ENCODE measurements at regions of chr13 and their contacts with region 1.

Region 1: DNA sequence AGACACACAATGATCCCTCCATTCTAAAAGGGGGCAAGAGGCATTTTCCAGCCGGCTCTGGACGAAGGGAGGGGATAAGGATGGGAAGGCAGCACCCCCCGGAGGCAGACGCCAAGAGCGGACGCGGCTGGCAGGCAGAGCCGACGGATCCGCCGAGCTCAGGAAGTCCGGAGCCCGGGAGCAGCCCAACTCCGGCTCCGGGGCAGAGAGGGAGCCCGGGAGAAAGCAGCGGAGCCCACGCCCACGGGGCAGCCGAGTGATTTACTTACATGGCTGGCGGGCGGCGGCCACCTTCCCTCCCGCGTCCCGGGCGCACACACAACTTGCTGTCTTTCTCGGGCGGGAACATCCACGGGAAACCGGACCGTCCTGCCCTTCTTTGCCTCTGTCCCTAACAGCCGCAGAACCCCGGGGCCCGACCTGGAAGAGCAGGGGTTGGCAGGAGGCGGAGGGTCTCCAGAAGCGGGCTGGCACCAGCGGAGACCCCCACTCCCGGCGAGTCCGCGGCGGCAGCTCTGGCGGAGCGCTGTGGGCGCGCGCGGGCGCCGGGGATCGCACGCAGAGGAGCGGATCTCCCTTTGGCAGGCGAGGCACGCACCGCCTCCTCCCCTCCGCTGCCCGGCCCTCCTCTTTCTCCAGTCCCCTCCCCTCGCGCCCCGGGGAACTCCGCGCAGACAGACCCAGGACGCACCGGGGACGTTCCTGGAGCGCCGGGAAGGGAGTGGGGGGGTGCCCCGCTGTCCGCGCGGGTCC is at the start of gene LHFPL6:
- DNase-seq: peak; percentile 79
- H3K4me3 ChIP-seq: peak within 1 kb of the TSS; percentile 65 to 69
- H3K27ac ChIP-seq: peak within 1 kb of the TSS; percentile 79 to 85
- H3K4me1 ChIP-seq: no peaks in the 10 kb centered on the region
- H3K27me3 ChIP-seq: no peaks in the 10 kb centered on the region
- CTCF ChIP-seq: peak in 1 of 4 experiments; percentile 17
- POLR2A ChIP-seq: peak; percentile 70
- total RNA-seq, gene LHFPL6: 7.5 to 40.0 TPM

Region 2: DNA sequence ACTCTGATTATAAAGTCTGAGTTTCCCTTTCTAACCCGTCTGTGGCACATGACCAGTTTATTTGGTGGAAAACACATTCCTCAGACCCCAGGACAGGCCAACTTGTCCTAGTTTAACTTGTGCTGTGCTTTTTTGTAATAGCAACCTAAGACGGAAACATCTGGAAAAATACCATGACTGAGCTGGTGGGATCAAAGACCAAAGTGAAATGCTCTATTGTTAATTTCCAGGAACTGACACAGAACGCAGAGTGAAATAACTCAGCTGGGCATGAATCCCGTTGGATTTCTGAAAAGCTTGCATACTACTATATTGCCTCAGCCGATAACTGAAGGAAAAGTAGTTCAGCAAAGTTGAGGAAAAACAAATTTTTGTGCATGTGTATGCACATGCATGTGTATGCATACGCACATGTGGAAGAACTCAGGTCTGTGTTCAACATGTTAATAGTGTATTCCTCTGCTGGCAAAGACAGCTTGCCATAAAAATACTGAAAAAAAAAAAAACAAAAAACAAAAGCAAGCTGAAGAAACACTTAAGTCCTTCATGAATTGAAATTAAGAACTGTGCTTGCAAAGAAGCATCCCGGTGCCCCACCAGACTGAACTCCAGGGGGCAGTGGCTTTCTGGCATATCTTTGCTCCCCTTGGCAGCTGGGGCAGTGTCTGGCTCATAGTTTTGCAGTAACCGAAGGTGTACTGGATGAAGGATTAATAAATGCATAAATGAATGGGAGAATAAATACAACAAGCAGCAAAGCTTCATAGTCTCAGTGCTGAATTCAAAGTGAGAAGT is 187.6 kb before region 1 on chr13:
- intact Hi-C with region 1: loop called (anchors 5 kb)
- DNase-seq: peak; percentile 23
- H3K4me3 ChIP-seq: no peak overlapping the region
- H3K27ac ChIP-seq: peak overlapping the region in 1 of 2 donors; percentile 3
- H3K4me1 ChIP-seq: no peaks in the 10 kb centered on the region
- H3K27me3 ChIP-seq: no peaks in the 10 kb centered on the region
- CTCF ChIP-seq: peak in 3 of 4 experiments; percentile 23 to 35 (median 31)
- POLR2A ChIP-seq: no peak

Region 3: GRCh38 chr13:39531646-39532045 is 71.1 kb before region 1 on chr13:
- intact Hi-C with region 1: loop called (anchors 5 kb)
- DNase-seq: no peak
- H3K4me3 ChIP-seq: no peak overlapping the region
- H3K27ac ChIP-seq: no peak overlapping the region
- H3K4me1 ChIP-seq: no peaks in the 10 kb centered on the region
- H3K27me3 ChIP-seq: no peaks in the 10 kb centered on the region
- CTCF ChIP-seq: no peak
- POLR2A ChIP-seq: no peak

Region 4: DNA sequence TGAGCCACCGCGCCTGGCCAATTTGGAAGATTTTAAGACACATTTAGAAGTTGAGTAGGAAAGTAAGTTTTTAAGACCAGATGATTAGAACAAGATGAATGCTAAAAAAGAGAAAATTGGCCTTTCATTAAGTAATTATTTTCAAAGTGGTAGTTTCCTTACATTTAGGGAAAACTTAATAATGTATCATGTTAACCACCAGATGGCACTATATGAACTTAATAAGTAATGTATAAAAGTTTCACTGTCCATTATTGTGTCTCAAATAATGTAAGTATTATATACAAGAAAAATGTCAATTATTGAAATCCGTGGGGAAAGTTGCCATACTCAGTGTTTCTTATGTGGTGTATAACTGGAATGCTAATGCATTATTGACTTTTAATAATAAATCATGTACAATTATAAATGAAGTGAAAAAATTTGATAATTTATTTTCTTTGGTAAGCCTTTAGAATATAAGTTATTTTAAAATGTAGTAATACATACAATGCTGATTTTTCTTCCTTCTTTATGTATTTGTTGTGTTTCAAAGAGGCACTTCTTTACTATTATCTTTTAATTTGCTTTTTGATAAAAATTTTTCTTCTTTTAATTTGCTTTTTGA is 81.8 kb after region 1 on chr13:
- intact Hi-C with region 1: no loop called
- DNase-seq: no peak
- H3K4me3 ChIP-seq: no peak overlapping the region
- H3K27ac ChIP-seq: no peak overlapping the region
- H3K4me1 ChIP-seq: no peaks in the 10 kb centered on the region
- H3K27me3 ChIP-seq: no peaks in the 10 kb centered on the region
- CTCF ChIP-seq: peak in 3 of 4 experiments; percentile 38 to 41 (median 39)
- POLR2A ChIP-seq: no peak

Region 5: GRCh38 chr13:39870197-39870747 is 267.5 kb after region 1 on chr13:
- intact Hi-C with region 1: no loop called
- DNase-seq: no peak
- H3K4me3 ChIP-seq: no peak overlapping the region
- H3K27ac ChIP-seq: no peak overlapping the region
- H3K4me1 ChIP-seq: no peaks in the 10 kb centered on the region
- H3K27me3 ChIP-seq: no peaks in the 10 kb centered on the region
- CTCF ChIP-seq: no peak
- POLR2A ChIP-seq: no peak

Measured in prostate gland (tissue), 2 donors.